Heart left ventricle (tissue), 16 donors: ENCODE measurements at regions of chr7 and their contacts with region 1.

Region 1: DNA sequence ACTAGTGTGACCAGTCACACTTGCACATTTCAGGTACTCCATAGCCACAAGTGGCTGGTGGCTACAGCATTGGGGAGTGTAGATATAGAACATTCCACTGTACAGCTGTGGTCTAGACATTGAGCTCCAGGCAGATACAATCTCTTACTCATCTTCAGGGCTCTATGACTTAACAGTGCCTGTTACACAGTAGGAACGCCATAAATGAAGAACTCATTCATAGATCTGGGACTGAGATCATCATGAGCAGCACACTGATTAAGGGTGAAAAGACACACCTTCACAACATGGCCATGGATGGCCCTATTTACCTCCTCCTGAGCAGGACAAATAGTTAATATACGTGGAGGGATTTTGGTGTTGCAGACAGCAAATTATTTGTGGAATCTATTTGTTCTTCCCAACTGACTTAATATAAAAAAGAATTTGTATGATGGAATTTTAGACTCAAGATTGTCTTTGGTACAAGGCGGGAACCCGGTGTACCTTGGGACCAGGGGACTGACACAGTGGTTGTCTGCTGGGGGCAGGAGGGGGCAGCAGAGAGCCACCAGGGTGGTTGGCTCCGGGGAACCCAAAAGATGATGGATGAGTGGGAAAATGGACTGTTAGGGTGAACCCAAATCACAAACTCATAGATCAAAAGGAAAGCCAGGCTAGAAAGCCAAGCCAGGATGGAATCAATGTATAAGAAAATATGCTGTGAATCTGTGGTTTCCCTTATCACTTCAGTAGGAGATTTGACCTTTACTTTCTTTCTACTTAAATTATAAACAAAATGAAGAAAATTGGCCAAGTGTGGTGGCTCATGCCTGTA is 24.3 kb upstream of the CPA2 start:
- DNase-seq: peak; percentile 44 to 71 (median 51)
- ATAC-seq: peak in 3 of 4 donors; percentile 77 to 85 (median 80)
- H3K4me3 ChIP-seq: no peak overlapping the region
- H3K27ac ChIP-seq: no peak overlapping the region
- H3K4me1 ChIP-seq: peaks cover 0 to 11% (median 0%) of the 10 kb centered on the region in 12 donors
- H3K27me3 ChIP-seq: no peaks in the 10 kb centered on the region
- CTCF ChIP-seq: peak; percentile 66 to 89 (median 75)
- POLR2A ChIP-seq: no peak

Region 2: GRCh38 chr7:130695840-130696239 is 453.4 kb after region 1 on chr7:
- intact Hi-C with region 1: loop called in 1 of 10 experiments (anchors 10 kb)
- DNase-seq: no peak
- ATAC-seq: no peak
- H3K4me3 ChIP-seq: no peak overlapping the region
- H3K27ac ChIP-seq: no peak overlapping the region
- H3K4me1 ChIP-seq: no peaks in the 10 kb centered on the region
- H3K27me3 ChIP-seq: no peaks in the 10 kb centered on the region
- CTCF ChIP-seq: peak; percentile 9 to 55 (median 39)
- POLR2A ChIP-seq: no peak

Region 3: DNA sequence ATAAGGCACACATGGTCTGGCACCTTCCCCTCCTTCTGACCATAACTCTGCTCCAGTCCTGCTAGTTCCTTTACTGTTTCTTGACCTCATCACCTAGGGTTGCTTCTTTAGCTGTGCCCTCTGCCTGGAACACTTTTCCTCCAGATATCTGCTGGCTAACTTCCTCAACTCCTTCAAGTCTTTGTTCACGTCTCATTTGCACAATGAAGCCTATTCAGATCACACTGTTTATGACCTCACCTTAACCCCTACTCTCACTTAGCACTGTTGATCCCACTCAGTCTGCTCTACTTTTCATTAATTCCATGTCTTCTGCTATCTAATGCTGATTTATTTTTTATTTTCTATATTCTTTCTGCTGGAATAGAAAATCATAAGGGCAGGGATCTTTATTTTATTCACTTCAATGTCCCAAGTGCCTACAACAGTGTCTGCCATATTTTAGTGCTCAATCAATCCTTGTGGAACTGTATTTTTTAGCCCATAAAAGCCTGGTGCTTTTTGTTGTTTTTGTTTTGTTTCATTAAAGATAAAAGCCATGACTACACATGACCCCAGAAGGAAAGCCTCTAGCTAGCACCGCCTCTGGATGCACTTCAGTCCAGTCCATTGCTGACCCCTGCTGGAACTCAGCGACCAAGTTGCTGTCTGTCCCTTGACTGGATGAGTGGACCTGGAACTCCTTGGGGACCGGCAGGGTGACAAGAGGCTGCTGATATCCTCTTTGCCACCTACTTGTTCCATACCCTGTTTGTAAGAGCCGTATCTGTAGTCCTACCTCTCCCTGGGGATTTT is 479.3 kb after region 1 on chr7:
- intact Hi-C with region 1: loop called in 9 of 10 experiments (anchors 1 to 10 kb)
- DNase-seq: peak; percentile 69 to 84 (median 79)
- ATAC-seq: peak; percentile 87 to 98 (median 95)
- H3K4me3 ChIP-seq: no peak overlapping the region
- H3K27ac ChIP-seq: no peak overlapping the region
- H3K4me1 ChIP-seq: peaks cover 0 to 7% (median 0%) of the 10 kb centered on the region in 12 donors
- H3K27me3 ChIP-seq: peaks cover 0 to 15% (median 0%) of the 10 kb centered on the region in 9 donors
- CTCF ChIP-seq: peak; percentile 48 to 85 (median 76)
- POLR2A ChIP-seq: no peak

Region 4: DNA sequence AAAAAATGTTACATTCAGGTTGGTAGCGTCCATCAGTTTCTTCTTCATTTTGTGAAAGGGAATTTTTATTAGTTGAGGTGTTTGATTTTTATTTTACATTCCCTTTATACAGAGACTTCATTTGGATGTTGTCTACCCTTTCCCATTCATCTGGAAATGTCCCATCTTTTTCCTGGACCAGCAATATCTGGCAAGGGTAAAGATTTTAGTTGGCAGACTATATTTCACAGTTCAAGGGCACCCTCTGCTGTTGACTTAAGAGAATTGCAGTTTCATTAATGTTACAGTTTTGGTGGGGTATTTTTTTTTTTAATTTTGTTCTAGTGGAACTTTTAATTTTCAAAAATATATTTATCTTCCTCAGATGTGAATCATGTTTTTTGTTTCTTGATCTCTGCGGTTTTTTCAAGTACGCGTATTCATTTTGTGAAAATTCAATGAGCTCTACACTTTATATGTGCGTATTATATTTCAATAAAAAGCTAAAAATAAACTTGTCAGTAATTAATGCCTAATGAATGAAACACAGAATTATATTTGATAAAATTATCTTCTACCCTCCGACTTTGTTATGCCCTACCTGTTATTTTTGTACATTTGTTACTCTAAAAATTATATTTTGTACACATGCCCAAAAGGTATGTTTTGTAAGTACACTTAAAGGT is 589.5 kb after region 1 on chr7:
- intact Hi-C with region 1: loop called in 2 of 10 experiments (anchors 10 kb)
- DNase-seq: no peak
- ATAC-seq: no peak
- H3K4me3 ChIP-seq: no peak overlapping the region
- H3K27ac ChIP-seq: no peak overlapping the region
- H3K4me1 ChIP-seq: no peaks in the 10 kb centered on the region
- H3K27me3 ChIP-seq: no peaks in the 10 kb centered on the region
- CTCF ChIP-seq: peak; percentile 58 to 87 (median 72)
- POLR2A ChIP-seq: no peak